Sigmoid colon (tissue), 7 donors: ENCODE measurements at regions of chr10 and their contacts with region 1.

Region 1: GRCh38 chr10:69318106-69318866 is 40.0 kb downstream of the HK1 start:
- DNase-seq: peak; percentile 96
- H3K4me3 ChIP-seq: peak overlapping the region; percentile 57 to 94 (median 78)
- H3K27ac ChIP-seq: peak overlapping the region; percentile 87 to 94 (median 91)
- H3K4me1 ChIP-seq: peaks cover 0 to 38% (median 27%) of the 10 kb centered on the region in 4 donors
- H3K27me3 ChIP-seq: no peaks in the 10 kb centered on the region
- CTCF ChIP-seq: no peak
- EP300 ChIP-seq: no peak
- POLR2A ChIP-seq: no peak

Region 2: DNA sequence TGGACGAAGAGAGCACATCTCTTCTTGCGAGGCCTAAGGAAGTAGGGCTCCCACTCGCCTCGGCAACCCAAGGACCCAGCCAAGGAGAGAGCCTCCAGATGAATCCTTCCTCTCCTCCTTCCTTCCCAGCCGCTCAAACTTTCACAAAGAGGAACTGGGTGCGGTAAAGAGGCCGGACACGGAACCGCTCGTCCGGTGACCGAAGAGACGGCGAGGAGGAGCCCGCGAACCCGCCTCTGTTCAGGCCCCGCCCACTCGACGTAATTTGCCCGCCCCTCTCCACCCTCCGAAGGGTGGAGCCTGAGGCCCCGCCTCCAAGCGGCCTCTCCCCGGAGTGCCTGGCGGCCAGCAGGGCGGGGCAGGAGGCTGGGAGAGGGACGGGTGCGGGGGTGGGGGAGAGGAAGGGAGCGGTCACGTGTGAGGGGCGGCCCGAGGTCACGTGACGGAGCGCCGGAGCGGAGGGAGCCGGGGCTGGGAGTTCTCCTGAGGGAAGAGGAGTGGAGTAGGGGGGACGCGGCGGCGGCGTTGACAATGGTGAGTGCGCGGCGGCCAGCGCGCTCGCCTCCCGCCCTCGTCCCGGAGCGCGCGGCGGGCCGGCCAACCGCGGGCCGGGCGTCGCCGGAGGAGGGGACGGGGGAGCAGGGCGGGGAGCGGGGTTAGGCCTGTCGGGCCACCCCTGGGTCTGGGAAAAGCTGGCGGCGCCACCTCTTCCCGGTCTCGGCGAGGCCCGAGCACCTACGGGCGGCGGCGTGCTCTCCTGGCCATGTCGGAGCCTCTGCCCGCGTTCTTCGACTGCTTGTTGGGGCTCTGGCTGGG is 194.3 kb before region 1 on chr10 and contains the start of gene VPS26A:
- intact Hi-C with region 1: loop called (anchors 2 kb)
- DNase-seq: peak; percentile 100
- H3K4me3 ChIP-seq: peak within 1 kb of the TSS; percentile 90 to 95 (median 94)
- H3K27ac ChIP-seq: peak within 1 kb of the TSS; percentile 95 to 99 (median 98)
- H3K4me1 ChIP-seq: peaks cover 0 to 23% (median 17%) of the 10 kb centered on the region in 4 donors
- H3K27me3 ChIP-seq: no peaks in the 10 kb centered on the region
- CTCF ChIP-seq: peak in 3 of 4 experiments; percentile 5 to 8 (median 6)
- EP300 ChIP-seq: peak in 1 of 4 donors; percentile 23
- POLR2A ChIP-seq: peak; percentile 97
- total RNA-seq, gene VPS26A: 35.7 to 59.2 (median 44.7) TPM

Region 3: GRCh38 chr10:69360485-69361324 is 42.4 kb after region 1 on chr10:
- intact Hi-C with region 1: loop called (anchors 5 kb)
- DNase-seq: peak; percentile 93
- H3K4me3 ChIP-seq: no peak overlapping the region
- H3K27ac ChIP-seq: peak overlapping the region; percentile 76 to 86 (median 78)
- H3K4me1 ChIP-seq: peaks cover 0 to 58% (median 49%) of the 10 kb centered on the region in 4 donors
- H3K27me3 ChIP-seq: no peaks in the 10 kb centered on the region
- CTCF ChIP-seq: no peak
- EP300 ChIP-seq: no peak
- POLR2A ChIP-seq: no peak

Region 4: GRCh38 chr10:69375307-69376151 is 57.2 kb after region 1 on chr10:
- intact Hi-C with region 1: loop called (anchors 5 kb)
- DNase-seq: peak; percentile 82
- H3K4me3 ChIP-seq: peak overlapping the region in 2 of 4 donors; percentile 9 to 24
- H3K27ac ChIP-seq: peak overlapping the region; percentile 72 to 86 (median 73)
- H3K4me1 ChIP-seq: peaks cover 0 to 36% (median 30%) of the 10 kb centered on the region in 4 donors
- H3K27me3 ChIP-seq: no peaks in the 10 kb centered on the region
- CTCF ChIP-seq: no peak
- EP300 ChIP-seq: no peak
- POLR2A ChIP-seq: no peak

Region 5: GRCh38 chr10:69392481-69393000 is 74.3 kb after region 1 on chr10:
- intact Hi-C with region 1: loop called (anchors 5 kb)
- DNase-seq: peak; percentile 95
- H3K4me3 ChIP-seq: no peak overlapping the region
- H3K27ac ChIP-seq: peak overlapping the region; percentile 6 to 44 (median 20)
- H3K4me1 ChIP-seq: peaks cover 0 to 12% (median 7%) of the 10 kb centered on the region in 4 donors
- H3K27me3 ChIP-seq: no peaks in the 10 kb centered on the region
- CTCF ChIP-seq: peak; percentile 93 to 99 (median 98)
- EP300 ChIP-seq: no peak
- POLR2A ChIP-seq: no peak